ENCODE measurements at regions of chr11 and their contacts with region 1.

Region 1: GRCh38 chr11:17730608-17731462 is 3.7 kb upstream of the KCNC1 start:
- DNase-seq: peak; percentile 73
- ATAC-seq: peak; percentile 88

Region 2: DNA sequence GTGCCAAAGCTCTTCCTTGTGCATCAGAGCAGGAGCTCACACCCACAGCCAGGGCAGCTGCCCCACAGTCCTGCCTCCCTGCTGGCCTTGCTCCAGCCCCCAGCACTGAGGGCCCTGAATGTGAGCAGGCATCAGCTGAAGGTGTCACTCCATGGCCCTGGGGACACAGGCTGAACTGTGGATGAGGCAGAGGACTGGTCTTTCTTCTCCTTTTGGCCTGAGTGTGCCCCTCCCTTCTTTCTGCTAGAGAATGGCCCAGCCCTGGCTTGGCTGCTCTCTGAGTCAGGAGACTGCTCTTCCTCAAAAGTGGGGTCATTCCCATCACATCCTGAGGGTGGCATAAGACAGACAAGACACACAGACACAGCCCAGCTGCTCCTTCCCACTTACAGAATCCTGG is 167.6 kb before region 1 on chr11:
- intact Hi-C with region 1: no loop called
- DNase-seq: no peak
- ATAC-seq: no peak

Region 3: DNA sequence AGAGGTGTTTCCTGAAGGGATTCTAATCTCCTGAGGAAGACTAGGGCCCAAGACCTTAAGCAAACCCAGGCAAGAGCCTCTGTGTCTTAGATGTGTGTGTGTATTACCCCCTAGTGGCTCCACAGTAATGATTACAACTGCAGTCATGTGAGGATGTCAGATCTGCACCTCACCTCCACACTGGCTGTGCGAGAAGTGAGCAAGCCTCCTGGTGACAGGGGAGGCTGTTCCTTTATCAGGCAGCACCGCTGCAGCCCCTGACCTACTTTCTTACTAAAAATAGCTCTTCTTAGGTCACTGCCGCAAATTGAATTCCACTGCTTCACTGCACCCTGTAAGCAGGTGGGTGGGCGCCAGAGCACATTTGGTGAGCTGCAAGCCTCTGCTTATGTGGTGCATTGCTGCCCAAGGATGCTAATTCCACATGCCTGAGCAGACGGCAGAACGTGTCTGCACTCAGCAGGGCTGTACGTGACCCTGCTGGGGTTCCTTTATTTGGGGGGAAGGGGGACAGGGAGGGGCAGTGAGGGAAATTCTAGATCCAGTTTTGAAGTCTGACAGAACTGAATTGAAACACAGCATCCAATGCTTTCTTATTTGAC is 116.1 kb after region 1 on chr11:
- intact Hi-C with region 1: loop called (anchors 10 kb)
- DNase-seq: no peak
- ATAC-seq: peak; percentile 67